Esophagus muscularis mucosa (tissue), 4 donors: ENCODE measurements at regions of chr19 and their contacts with region 1.

Region 1: GRCh38 chr19:39428283-39429112 is 7.3 kb downstream of the RPS16 start:
- DNase-seq: no peak
- H3K4me3 ChIP-seq: peak overlapping the region in 3 of 4 donors; percentile 3 to 14 (median 12)
- H3K27ac ChIP-seq: peak overlapping the region; percentile 84 to 91 (median 86)
- H3K4me1 ChIP-seq: peaks cover 23 to 43% (median 37%) of the 10 kb centered on the region in 4 donors
- H3K27me3 ChIP-seq: no peaks in the 10 kb centered on the region
- CTCF ChIP-seq: no peak
- EP300 ChIP-seq: peak; percentile 6
- POLR2A ChIP-seq: no peak

Region 2: GRCh38 chr19:39341719-39342604 is 86.5 kb before region 1 on chr19 and contains the start of gene SAMD4B:
- intact Hi-C with region 1: loop called (anchors 10 kb)
- DNase-seq: peak; percentile 100
- H3K4me3 ChIP-seq: peak within 1 kb of the TSS; percentile 84 to 91 (median 88)
- H3K27ac ChIP-seq: peak within 1 kb of the TSS; percentile 88 to 93 (median 90)
- H3K4me1 ChIP-seq: peaks cover 40 to 55% (median 54%) of the 10 kb centered on the region in 4 donors
- H3K27me3 ChIP-seq: no peaks in the 10 kb centered on the region
- CTCF ChIP-seq: peak; percentile 78 to 91 (median 84)
- EP300 ChIP-seq: no peak
- POLR2A ChIP-seq: peak; percentile 79
- total RNA-seq, gene SAMD4B: 59.8 to 138 (median 104) TPM

Region 3: DNA sequence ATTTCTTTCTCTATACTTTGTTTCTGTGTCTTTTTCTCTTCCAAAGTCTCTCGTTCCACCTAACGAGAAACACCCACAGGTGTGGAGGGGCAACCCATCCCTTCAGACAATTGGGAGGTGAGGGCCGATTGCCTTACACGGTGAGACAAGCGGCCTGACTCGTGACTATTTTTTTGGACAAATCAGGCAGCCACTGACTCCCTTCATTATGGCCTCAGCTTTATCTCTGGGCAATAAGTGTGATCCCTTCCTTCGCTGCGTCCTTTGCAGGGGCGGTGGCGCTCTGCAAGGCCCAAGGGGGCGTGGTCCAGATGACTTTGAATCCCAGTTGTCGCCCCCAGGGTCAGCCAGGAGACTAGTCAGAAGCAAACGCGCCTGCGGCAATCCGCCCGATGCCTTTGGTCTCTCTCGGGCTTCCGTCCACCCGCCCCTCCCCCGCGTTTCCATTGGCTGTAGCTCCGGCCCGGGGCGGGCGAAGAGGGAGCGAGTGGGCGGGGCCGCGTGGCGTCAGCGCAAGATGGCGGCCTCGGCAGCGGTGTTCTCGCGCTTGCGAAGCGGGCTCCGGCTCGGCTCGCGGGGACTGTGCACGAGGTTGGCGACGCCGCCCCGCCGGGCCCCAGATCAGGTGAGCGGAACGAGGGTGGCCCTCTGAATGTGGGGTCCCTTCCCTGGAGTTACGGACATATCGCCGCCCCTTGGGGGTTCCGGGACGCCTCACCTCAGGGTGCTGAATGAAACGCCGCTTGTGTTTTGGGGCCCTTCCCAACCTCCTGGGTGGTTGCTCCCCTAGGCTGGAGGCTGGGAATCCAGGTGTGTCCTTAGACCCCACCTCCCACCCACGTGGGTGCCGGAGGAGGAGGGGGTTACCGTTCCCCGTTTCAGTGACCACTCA is 52.1 kb after region 1 on chr19 and contains the start of gene TIMM50:
- intact Hi-C with region 1: no loop called
- DNase-seq: peak; percentile 99
- H3K4me3 ChIP-seq: peak within 1 kb of the TSS; percentile 66 to 97 (median 82)
- H3K27ac ChIP-seq: peak within 1 kb of the TSS; percentile 75 to 87 (median 81)
- H3K4me1 ChIP-seq: peaks cover 18 to 32% (median 18%) of the 10 kb centered on the region in 4 donors
- H3K27me3 ChIP-seq: no peaks in the 10 kb centered on the region
- CTCF ChIP-seq: peak in 1 of 3 experiments; percentile 10
- EP300 ChIP-seq: no peak
- POLR2A ChIP-seq: no peak
- total RNA-seq, gene TIMM50: 36.1 to 58.0 (median 51.3) TPM

Region 4: DNA sequence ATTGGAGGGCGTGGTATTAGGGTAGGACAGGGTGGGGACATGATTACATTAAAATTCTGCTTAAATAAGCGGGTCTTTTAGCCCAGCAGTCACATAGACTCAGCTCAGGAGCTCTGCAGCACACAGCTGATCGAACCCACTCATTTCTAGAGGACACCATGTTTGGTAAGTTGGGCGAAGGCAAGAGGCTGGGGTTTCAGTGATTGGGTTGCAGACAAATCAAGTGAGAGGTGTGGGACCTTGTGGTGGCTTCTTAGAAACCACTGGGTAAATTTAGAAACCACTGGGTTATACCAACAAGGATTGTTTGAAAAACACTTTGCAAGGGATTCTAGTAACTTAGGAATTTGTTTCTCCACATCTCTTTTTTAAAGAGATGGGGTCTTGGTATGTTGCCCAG is 350.3 kb after region 1 on chr19 and contains the start of gene LEUTX:
- intact Hi-C with region 1: no loop called
- DNase-seq: no peak
- H3K4me3 ChIP-seq: no peak within 1 kb of the TSS
- H3K27ac ChIP-seq: no peak within 1 kb of the TSS
- H3K4me1 ChIP-seq: no peaks in the 10 kb centered on the region
- H3K27me3 ChIP-seq: peaks cover 0 to 12% (median 0%) of the 10 kb centered on the region in 4 donors
- CTCF ChIP-seq: no peak
- EP300 ChIP-seq: no peak
- POLR2A ChIP-seq: no peak
- total RNA-seq, gene LEUTX: not detected

Region 5: GRCh38 chr19:39858541-39858940 is 430.0 kb after region 1 on chr19:
- intact Hi-C with region 1: no loop called
- DNase-seq: no peak
- H3K4me3 ChIP-seq: no peak overlapping the region
- H3K27ac ChIP-seq: no peak overlapping the region
- H3K4me1 ChIP-seq: no peaks in the 10 kb centered on the region
- H3K27me3 ChIP-seq: peaks cover 0 to 8% (median 0%) of the 10 kb centered on the region in 4 donors
- CTCF ChIP-seq: no peak
- EP300 ChIP-seq: no peak
- POLR2A ChIP-seq: no peak